ENCODE measurements at regions of chr14 and their contacts with region 1.

Region 1: GRCh38 chr14:23113431-23114119 is 5.5 kb downstream of the CEBPE start:
- DNase-seq: no peak
- H3K4me3 ChIP-seq: no peak overlapping the region
- H3K4me3 Mint-ChIP-seq: no peak overlapping the region
- H3K27ac Mint-ChIP-seq: no peak overlapping the region
- H3K4me1 ChIP-seq: no peaks in the 10 kb centered on the region
- H3K4me1 Mint-ChIP-seq: no peaks in the 10 kb centered on the region
- H3K27me3 ChIP-seq: no peaks in the 10 kb centered on the region
- H3K27me3 Mint-ChIP-seq: no peaks in the 10 kb centered on the region
- CTCF ChIP-seq: no peak

Region 2: GRCh38 chr14:22994762-22995275 is 118.8 kb before region 1 on chr14:
- CTCF ChIA-PET with region 1: no interaction called
- POLR2A ChIA-PET with region 1: no interaction called
- intact Hi-C with region 1: loop called (anchors 2 kb)
- DNase-seq: peak in 1 of 2 experiments; percentile 56
- H3K4me3 ChIP-seq: no peak overlapping the region
- H3K4me3 Mint-ChIP-seq: peak overlapping the region; percentile 12
- H3K27ac Mint-ChIP-seq: peak overlapping the region; percentile 51
- H3K4me1 ChIP-seq: peaks cover 10% of the 10 kb centered on the region
- H3K4me1 Mint-ChIP-seq: peaks cover 3% of the 10 kb centered on the region
- H3K27me3 ChIP-seq: no peaks in the 10 kb centered on the region
- H3K27me3 Mint-ChIP-seq: no peaks in the 10 kb centered on the region
- CTCF ChIP-seq: peak; percentile 58 to 60

Region 3: DNA sequence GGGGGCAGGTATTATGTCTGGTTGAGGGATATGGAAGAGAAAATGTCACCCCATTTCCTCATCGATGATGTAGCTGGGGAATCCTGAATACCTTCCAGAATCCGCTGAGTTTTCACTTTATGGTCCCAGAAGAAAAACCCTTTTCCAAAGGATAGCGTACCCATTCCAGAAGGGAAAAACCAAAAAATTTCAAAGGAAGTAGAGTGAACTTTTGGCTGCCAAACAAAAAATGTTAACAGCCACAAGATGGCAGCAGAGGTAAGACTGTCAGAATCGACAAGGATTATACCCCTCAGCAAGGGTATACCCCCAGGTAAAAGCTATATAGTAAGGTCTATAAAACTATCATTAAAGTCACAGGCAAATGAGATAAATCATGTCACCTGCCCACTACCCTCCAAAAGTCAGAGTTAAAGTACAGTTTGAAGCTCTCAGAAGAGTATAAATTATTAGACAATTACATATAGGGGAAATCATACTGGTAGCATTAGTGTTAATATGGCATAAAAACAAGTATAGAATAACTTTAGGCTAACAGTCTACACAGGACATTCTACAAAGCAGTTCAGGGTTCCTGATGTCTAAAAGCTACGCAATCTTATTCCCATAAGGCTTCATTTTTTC is 36.7 kb before region 1 on chr14:
- CTCF ChIA-PET with region 1: interaction called, 17 read pairs
- POLR2A ChIA-PET with region 1: interaction called, 3 read pairs
- intact Hi-C with region 1: loop called (anchors 2 kb)
- DNase-seq: peak in 1 of 2 experiments; percentile 55
- H3K4me3 ChIP-seq: no peak overlapping the region
- H3K4me3 Mint-ChIP-seq: no peak overlapping the region
- H3K27ac Mint-ChIP-seq: no peak overlapping the region
- H3K4me1 ChIP-seq: peaks cover 58% of the 10 kb centered on the region
- H3K4me1 Mint-ChIP-seq: peaks cover 29% of the 10 kb centered on the region
- H3K27me3 ChIP-seq: no peaks in the 10 kb centered on the region
- H3K27me3 Mint-ChIP-seq: no peaks in the 10 kb centered on the region
- CTCF ChIP-seq: peak; percentile 50 to 60

Measured in Caco-2 (cell line).